Activated B cell treated with CpG ODN at 0.5 μM for 24 hours (primary cell): ENCODE measurements at regions of chr7 and their contacts with region 1.

Region 1: GRCh38 chr7:4973728-4974198 is 14.8 kb upstream of the MMD2 start:
- DNase-seq: peak; percentile 96
- ATAC-seq: peak; percentile 96
- H3K4me3 Mint-ChIP-seq: peak overlapping the region; percentile 99
- H3K27ac Mint-ChIP-seq: peak overlapping the region; percentile 97
- H3K4me1 Mint-ChIP-seq: peaks cover 21% of the 10 kb centered on the region
- H3K27me3 Mint-ChIP-seq: no peaks in the 10 kb centered on the region
- CTCF ChIP-seq: peak; percentile 50

Region 2: DNA sequence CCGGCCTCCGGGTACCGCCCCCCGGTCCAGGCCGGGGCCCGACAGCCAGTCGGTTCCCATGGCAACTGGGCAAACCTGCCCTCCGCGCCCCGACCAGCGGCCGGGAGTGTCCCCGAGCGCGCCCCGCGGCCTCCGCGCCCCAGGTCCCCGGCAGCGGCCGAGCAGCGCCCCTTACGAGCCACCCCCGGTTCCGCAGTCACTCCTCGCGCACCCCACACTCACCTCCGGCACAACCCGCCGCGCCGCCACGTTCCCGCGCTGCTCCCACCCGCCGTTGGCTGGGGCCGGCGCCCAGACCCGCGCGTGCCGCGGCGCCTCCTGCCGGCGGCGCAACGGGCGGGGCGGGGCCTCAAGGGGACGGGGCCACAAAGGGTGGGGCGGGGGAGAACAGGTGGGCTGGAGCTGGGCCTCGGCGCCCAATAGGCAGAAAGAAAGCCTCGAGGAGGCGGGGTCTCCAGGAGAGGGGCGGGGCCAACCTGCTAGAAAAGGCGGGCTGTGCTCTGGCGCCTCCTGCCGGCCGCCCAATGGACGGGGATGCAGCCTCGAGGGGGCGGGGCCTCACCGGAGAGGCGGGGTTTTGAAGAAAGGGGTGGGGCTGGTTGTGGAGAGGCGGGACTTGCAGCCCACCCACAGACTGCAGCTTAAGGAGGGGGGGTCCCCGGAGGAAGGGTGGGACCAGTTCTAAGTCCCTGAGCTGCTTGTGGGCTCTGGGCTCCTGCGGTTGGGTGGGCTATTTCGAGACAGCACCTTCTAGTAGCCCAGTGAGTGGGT is 90.2 kb before region 1 on chr7 and contains the start of gene RADIL:
- CTCF ChIA-PET with region 1: no interaction called
- POLR2A ChIA-PET with region 1: no interaction called
- intact Hi-C with region 1: loop called (anchors 10 kb)
- DNase-seq: peak; percentile 62
- ATAC-seq: peak; percentile 97
- H3K4me3 Mint-ChIP-seq: peak within 1 kb of the TSS; percentile 46
- H3K27ac Mint-ChIP-seq: no peak within 1 kb of the TSS
- H3K4me1 Mint-ChIP-seq: peaks cover 12% of the 10 kb centered on the region
- H3K27me3 Mint-ChIP-seq: peaks cover 45% of the 10 kb centered on the region
- CTCF ChIP-seq: no peak
- total RNA-seq, gene RADIL: not detected in 2 replicates

Region 3: DNA sequence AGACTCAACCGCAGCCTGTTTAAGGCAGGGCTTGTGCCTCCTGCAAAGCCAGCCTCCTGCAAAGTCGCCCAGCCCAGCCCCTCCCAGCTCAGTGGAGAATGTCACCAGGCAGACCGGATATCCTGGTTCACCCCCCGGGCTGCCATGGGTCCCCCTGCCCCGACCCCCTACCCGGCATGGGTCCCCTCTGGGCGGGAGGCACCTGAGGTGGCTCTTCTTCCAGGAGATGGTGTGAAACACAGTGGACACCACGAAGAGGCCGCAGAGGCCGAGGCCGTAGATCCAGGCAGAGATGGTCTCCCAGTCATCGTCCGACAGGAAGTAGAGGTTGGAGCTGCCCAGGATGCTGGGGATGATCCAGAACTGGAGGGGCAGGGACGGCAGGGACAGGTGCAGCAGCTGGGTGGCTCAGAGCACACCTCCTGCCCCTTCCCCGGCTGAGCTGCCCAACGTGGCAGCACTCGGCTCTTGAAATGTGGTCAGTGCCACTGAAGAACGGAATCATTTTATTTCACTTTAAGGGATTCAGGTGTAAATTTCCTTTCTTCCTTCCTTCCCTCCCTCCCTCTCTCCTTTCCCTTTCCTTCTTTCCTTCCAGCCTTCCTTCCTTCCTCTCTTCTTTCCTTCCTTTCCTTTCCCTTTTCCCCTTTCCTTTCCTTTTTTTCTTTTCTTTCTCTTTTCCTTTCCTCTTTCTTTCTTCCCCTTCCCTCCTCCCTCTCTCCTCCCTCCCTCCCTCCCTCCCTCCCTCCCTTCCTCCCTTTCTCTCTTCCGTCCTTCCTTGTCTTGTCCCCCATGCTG is 53.6 kb before region 1 on chr7:
- CTCF ChIA-PET with region 1: no interaction called
- POLR2A ChIA-PET with region 1: no interaction called
- intact Hi-C with region 1: no loop called
- DNase-seq: no peak
- ATAC-seq: no peak
- H3K4me3 Mint-ChIP-seq: no peak overlapping the region
- H3K27ac Mint-ChIP-seq: no peak overlapping the region
- H3K4me1 Mint-ChIP-seq: no peaks in the 10 kb centered on the region
- H3K27me3 Mint-ChIP-seq: no peaks in the 10 kb centered on the region
- CTCF ChIP-seq: no peak

Region 4: DNA sequence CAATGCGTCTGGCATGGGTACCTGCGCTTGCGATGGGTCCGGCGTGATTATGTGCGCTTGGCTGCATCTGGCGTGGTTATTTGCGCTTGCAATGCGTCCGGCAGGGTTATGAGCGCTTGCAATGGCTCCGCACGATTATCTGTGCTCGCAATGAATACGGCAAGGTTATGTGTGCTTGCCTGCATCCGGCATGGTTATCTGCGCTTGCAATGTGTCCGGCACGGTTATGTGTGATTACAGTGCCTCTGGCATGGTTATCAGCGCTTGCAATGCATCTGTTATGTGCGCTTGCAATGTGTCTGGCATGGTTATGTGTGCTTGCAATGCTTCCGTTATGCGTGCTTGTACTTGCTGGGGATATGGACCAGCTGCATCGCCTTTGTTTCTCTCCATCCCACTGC is 109.5 kb after region 1 on chr7:
- CTCF ChIA-PET with region 1: interaction called, 32 read pairs
- POLR2A ChIA-PET with region 1: no interaction called
- intact Hi-C with region 1: loop called (anchors 1 kb)
- DNase-seq: no peak
- ATAC-seq: no peak
- H3K4me3 Mint-ChIP-seq: no peak overlapping the region
- H3K27ac Mint-ChIP-seq: no peak overlapping the region
- H3K4me1 Mint-ChIP-seq: no peaks in the 10 kb centered on the region
- H3K27me3 Mint-ChIP-seq: peaks cover 4% of the 10 kb centered on the region
- CTCF ChIP-seq: no peak

Region 5: GRCh38 chr7:5780801-5781496 is 807.2 kb after region 1 on chr7:
- CTCF ChIA-PET with region 1: no interaction called
- POLR2A ChIA-PET with region 1: no interaction called
- intact Hi-C with region 1: loop called (anchors 5 kb)
- DNase-seq: no peak
- ATAC-seq: peak; percentile 40
- H3K4me3 Mint-ChIP-seq: peak overlapping the region; percentile 88
- H3K27ac Mint-ChIP-seq: peak overlapping the region; percentile 80
- H3K4me1 Mint-ChIP-seq: peaks cover 41% of the 10 kb centered on the region
- H3K27me3 Mint-ChIP-seq: no peaks in the 10 kb centered on the region
- CTCF ChIP-seq: no peak